Mammary epithelial cell (primary cell): ENCODE measurements at regions of chr14 and their contacts with region 1.

Region 1: DNA sequence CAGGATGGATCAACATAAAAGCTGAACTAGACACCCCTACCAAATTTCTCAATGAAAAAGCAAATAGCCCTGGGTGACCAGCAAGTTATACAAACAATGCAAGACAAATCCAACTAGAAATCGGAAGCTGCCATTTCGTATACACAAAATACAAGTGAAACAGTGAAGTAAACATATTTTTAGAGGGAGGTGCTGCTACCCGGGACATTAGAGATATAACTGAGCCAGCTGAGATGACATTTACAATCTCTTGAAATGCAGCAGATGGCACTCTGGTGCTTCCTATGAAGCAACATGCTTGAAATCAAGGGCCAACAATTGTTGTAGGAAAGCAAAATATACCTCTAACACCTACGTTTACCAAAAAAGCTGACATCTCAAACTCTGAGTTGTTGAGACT is 25.5 kb downstream of the BDKRB1 start:
- DNase-seq: no peak
- H3K4me3 ChIP-seq: no peak overlapping the region
- H3K27ac ChIP-seq: no peak overlapping the region
- H3K4me1 ChIP-seq: no peaks in the 10 kb centered on the region
- H3K27me3 ChIP-seq: no peaks in the 10 kb centered on the region
- CTCF ChIP-seq: no peak

Region 2: GRCh38 chr14:96268431-96269358 is 12.8 kb before region 1 on chr14:
- CTCF ChIA-PET with region 1: no interaction called
- dilution Hi-C with region 1: no loop called
- in situ Hi-C with region 1: no loop called
- intact Hi-C with region 1: no loop called
- DNase-seq: peak; percentile 99
- H3K4me3 ChIP-seq: no peak overlapping the region
- H3K27ac ChIP-seq: peak overlapping the region; percentile 78
- H3K4me1 ChIP-seq: peaks cover 46% of the 10 kb centered on the region
- H3K27me3 ChIP-seq: no peaks in the 10 kb centered on the region
- CTCF ChIP-seq: no peak

Region 3: DNA sequence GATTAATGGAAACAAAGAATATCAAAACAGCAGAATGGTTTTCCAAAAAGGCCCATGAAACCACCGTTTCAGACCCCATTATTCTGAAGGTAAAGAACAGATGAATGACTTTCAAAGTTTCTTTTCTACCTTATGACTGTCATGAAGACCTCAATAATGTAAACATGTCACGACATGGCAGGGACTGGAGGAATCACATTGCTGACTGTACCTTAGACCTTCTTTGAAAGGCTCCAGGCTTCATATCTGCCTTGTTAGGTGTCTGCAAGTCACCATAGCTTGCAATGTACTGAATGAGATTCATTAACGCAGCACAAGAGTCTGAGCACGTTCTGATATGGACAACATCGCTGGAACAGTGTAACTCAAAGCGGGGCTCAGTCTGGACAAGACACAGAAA is 29.4 kb after region 1 on chr14:
- CTCF ChIA-PET with region 1: no interaction called
- dilution Hi-C with region 1: no loop called
- in situ Hi-C with region 1: no loop called
- intact Hi-C with region 1: loop called (anchors 1 kb)
- DNase-seq: no peak
- H3K4me3 ChIP-seq: no peak overlapping the region
- H3K27ac ChIP-seq: no peak overlapping the region
- H3K4me1 ChIP-seq: no peaks in the 10 kb centered on the region
- H3K27me3 ChIP-seq: no peaks in the 10 kb centered on the region
- CTCF ChIP-seq: no peak

Region 4: DNA sequence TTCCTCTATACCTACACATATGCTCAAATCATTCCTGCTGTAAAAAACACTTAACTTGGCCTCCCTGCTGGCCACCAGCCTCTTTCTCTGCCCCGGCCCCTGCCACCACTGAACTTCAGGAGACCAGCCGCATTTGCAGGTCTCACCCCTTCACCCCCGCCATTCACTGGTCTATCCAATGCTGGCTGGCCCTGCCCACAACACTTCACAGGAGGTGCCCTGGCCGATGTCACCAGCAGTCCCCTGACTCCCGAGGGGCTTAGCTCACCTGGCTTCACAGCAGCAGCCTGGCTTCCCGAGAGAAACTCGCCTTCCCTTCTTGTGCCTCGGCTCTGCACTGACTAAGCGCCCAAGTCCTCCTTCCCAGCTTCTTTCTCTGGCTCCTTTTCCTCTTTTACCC is 117.9 kb after region 1 on chr14:
- CTCF ChIA-PET with region 1: no interaction called
- dilution Hi-C with region 1: loop called (anchors 5 kb)
- in situ Hi-C with region 1: no loop called
- intact Hi-C with region 1: no loop called
- DNase-seq: no peak
- H3K4me3 ChIP-seq: no peak overlapping the region
- H3K27ac ChIP-seq: no peak overlapping the region
- H3K4me1 ChIP-seq: no peaks in the 10 kb centered on the region
- H3K27me3 ChIP-seq: peaks cover 3% of the 10 kb centered on the region
- CTCF ChIP-seq: no peak